ENCODE measurements at regions of chrX and their contacts with region 1.

Region 1: GRCh38 chrX:110002300-110003166 is at the start of gene TMEM164:
- H3K4me3 Mint-ChIP-seq: peak within 1 kb of the TSS; percentile 95
- H3K27ac Mint-ChIP-seq: peak within 1 kb of the TSS; percentile 94
- H3K4me1 Mint-ChIP-seq: peaks cover 45% of the 10 kb centered on the region
- H3K27me3 Mint-ChIP-seq: no peaks in the 10 kb centered on the region

Region 2: DNA sequence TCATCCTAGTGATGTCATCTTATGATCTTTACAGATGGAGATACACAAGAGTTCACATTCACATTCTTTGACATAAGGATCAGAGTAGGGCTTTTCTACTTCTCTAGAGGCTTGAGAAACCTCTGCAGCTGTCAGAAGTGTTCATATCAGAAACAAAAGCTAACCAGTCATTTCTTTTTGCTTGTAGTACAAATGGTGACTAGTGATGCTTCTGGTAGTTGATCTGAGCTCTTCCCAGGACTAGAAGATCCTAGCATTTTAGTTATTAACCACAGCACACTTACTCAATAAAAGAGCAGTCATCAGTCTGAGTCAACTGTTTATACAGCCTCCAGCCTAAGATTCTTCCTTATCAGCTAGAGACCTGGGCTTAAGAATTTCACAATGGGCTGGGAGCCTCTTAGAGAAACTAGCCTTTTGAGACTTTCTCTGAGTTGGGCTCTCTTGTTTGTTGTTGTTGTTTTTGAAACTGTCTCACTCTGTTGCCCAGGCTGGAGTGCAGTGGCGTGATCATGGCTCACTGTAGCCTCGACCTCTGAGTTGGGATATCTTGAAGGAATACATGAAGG is 84.5 kb after region 1 on chrX:
- intact Hi-C with region 1: loop called (anchors 5 kb)
- H3K4me3 Mint-ChIP-seq: no peak overlapping the region
- H3K27ac Mint-ChIP-seq: peak overlapping the region; percentile 82
- H3K4me1 Mint-ChIP-seq: peaks cover 34% of the 10 kb centered on the region
- H3K27me3 Mint-ChIP-seq: no peaks in the 10 kb centered on the region

Measured in dendritic cell treated with granulocyte-macrophage colony-stimulating factor and Interleukin-4, amounts not matched to agents 40 ng/mL and 50 ng/mL, for 4 days (primary cell).